ENCODE measurements at regions of chr1 and their contacts with region 1.

Region 1: GRCh38 chr1:228457396-228458176 is 29.6 kb upstream of the RNF187 start:
- DNase-seq: peak; percentile 68 to 97 (median 80)
- ATAC-seq: peak; percentile 84 to 88 (median 87)
- H3K4me3 ChIP-seq: peak overlapping the region; percentile 60 to 68
- H3K4me3 Mint-ChIP-seq: peak overlapping the region; percentile 97 to 99 (median 97)
- H3K27ac ChIP-seq: peak overlapping the region; percentile 93
- H3K27ac Mint-ChIP-seq: peak overlapping the region; percentile 97 to 98
- H3K4me1 ChIP-seq: peaks cover 4 to 32% of the 10 kb centered on the region in 2 experiments
- H3K4me1 Mint-ChIP-seq: peaks cover 40 to 48% (median 43%) of the 10 kb centered on the region in 3 donors
- H3K27me3 ChIP-seq: peaks cover 0 to 2% of the 10 kb centered on the region in 2 experiments
- H3K27me3 Mint-ChIP-seq: peaks cover 0 to 4% of the 10 kb centered on the region in 2 donors

Region 2: DNA sequence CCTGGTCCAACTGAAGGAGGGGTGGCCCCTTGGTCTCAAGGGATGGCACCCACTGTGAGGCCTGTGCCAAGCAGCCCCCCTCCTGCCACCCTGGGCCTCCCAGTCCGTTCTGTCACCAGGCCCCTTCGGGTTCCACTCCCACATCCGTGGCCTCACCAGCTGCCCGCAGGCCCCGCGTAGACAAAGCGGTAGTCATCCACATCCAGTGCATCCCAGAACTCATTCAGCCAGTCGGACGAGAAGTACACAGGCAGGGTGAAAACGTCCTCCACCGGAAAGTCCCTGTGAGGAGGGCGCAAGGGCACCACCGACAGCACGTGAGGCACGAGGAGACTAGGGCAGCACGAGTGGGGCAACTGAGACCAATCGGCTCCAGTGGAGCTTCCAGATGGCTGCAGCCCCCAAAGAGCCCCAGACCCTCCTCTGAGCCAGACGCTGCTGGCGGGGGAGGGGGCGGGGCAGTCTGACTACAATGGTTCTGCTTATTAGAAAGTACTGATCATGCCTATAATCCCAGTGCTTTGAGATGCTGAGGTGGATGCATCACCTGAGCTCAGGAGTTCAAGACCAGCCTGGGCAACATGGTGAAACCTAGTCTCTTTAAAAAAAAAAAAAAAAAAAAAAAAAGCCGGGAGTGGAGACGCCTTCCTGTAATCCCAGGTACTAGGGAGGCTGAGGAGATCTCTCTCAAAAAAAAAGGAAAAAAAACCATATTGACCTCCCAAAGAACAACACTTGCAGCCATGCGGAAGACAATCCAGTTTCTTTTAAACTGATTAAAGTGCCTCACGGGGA is 723.6 kb before region 1 on chr1:
- CTCF ChIA-PET with region 1: no interaction called
- POLR2A ChIA-PET with region 1: interaction called in 1 of 2 experiments, 10 read pairs
- DNase-seq: no peak
- ATAC-seq: no peak
- H3K4me3 ChIP-seq: peak overlapping the region; percentile 70 to 75
- H3K4me3 Mint-ChIP-seq: peak overlapping the region; percentile 83 to 92 (median 89)
- H3K27ac ChIP-seq: no peak overlapping the region
- H3K27ac Mint-ChIP-seq: peak overlapping the region; percentile 77 to 84
- H3K4me1 ChIP-seq: peaks cover 13 to 51% of the 10 kb centered on the region in 2 experiments
- H3K4me1 Mint-ChIP-seq: peaks cover 49 to 56% (median 56%) of the 10 kb centered on the region in 3 donors
- H3K27me3 ChIP-seq: no peaks in the 10 kb centered on the region
- H3K27me3 Mint-ChIP-seq: no peaks in the 10 kb centered on the region

Region 3: GRCh38 chr1:228407118-228408042 is 50.2 kb before region 1 on chr1:
- CTCF ChIA-PET with region 1: interaction called in 1 of 2 experiments, 8 read pairs
- POLR2A ChIA-PET with region 1: interaction called in 1 of 2 experiments, 12 read pairs
- DNase-seq: no peak
- ATAC-seq: no peak
- H3K4me3 ChIP-seq: peak overlapping the region; percentile 73 to 74
- H3K4me3 Mint-ChIP-seq: peak overlapping the region; percentile 89 to 93 (median 93)
- H3K27ac ChIP-seq: peak overlapping the region; percentile 42
- H3K27ac Mint-ChIP-seq: peak overlapping the region in 1 of 2 donors; percentile 77
- H3K4me1 ChIP-seq: peaks cover 18 to 55% of the 10 kb centered on the region in 2 experiments
- H3K4me1 Mint-ChIP-seq: peaks cover 32 to 49% (median 45%) of the 10 kb centered on the region in 3 donors
- H3K27me3 ChIP-seq: no peaks in the 10 kb centered on the region
- H3K27me3 Mint-ChIP-seq: no peaks in the 10 kb centered on the region

Region 4: DNA sequence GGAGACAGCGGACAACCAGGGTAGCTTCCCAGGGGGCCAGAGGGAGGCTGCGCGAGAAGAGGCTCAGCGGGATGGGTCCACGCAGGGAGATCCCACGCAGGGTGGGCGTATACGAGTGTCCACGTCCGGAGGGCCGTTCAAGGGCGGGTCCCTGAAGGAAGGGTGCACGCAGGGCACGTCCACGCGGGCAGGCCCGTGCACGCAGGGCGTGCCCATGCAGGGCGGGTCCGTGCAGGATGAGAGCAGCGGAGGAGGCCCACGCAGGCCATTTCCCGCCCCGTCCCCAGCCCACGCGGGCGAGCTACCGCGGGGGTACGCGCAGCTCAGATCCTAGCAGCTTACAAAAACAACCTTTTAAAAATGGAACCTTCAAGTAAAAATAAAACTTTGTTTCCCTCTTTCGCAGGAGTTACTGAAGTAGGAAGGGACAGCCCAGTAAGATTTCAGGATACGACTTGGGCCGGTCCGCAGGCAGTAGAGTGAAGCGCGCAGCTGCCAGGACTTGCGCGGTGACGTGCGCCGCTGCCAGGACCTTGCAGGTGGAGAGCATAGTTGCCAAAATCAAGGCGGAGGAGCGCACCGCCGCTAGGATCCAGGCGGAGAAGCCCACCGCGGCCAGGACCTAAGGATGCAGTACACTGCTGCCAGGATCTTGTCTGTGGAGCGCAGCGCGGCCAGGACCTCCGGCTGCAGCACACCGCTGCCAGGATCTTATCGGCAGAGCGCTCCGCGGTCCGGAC is 29.2 kb after region 1 on chr1:
- CTCF ChIA-PET with region 1: interaction called, 7 to 15 read pairs
- POLR2A ChIA-PET with region 1: interaction called in 1 of 2 experiments, 10 read pairs
- DNase-seq: peak; percentile 59 to 87 (median 75)
- ATAC-seq: peak; percentile 72 to 78 (median 78)
- H3K4me3 ChIP-seq: peak overlapping the region; percentile 97 to 98
- H3K4me3 Mint-ChIP-seq: peak overlapping the region; percentile 93 to 97 (median 95)
- H3K27ac ChIP-seq: peak overlapping the region; percentile 100
- H3K27ac Mint-ChIP-seq: peak overlapping the region; percentile 100
- H3K4me1 ChIP-seq: peaks cover 2 to 48% of the 10 kb centered on the region in 2 experiments
- H3K4me1 Mint-ChIP-seq: peaks cover 31 to 44% (median 37%) of the 10 kb centered on the region in 3 donors
- H3K27me3 ChIP-seq: no peaks in the 10 kb centered on the region
- H3K27me3 Mint-ChIP-seq: no peaks in the 10 kb centered on the region

Region 5: DNA sequence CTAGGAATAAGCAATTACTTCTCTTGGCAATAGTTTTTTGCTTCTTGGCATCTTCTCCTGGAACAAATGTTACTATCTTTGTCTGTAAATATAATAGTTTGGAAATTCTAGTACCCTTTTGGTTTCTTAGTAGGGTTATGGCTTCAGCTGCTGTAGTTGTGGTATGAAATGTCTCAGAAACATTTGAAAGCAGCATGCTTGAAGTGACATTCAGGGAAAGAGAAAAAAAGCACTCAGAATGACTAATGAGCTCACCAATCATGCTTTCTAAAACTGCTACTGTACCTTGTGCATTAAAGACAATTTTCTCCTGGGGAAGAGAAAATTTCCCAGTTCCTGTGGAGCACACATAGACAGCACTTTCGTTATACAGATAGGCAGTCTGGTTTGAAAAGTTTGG is 1029.6 kb after region 1 on chr1:
- CTCF ChIA-PET with region 1: no interaction called
- POLR2A ChIA-PET with region 1: interaction called in 1 of 2 experiments, 10 read pairs
- DNase-seq: no peak
- ATAC-seq: no peak
- H3K4me3 ChIP-seq: no peak overlapping the region
- H3K4me3 Mint-ChIP-seq: no peak overlapping the region
- H3K27ac ChIP-seq: no peak overlapping the region
- H3K27ac Mint-ChIP-seq: no peak overlapping the region
- H3K4me1 ChIP-seq: no peaks in the 10 kb centered on the region
- H3K4me1 Mint-ChIP-seq: peaks cover 1 to 5% (median 3%) of the 10 kb centered on the region in 3 donors
- H3K27me3 ChIP-seq: no peaks in the 10 kb centered on the region
- H3K27me3 Mint-ChIP-seq: no peaks in the 10 kb centered on the region